ENCODE measurements at regions of chr1 and their contacts with region 1.

Region 1: GRCh38 chr1:205658943-205659581 is 21.2 kb downstream of the SLC45A3 start:
- DNase-seq: peak; percentile 85 to 95
- ATAC-seq: peak; percentile 83
- H3K4me3 ChIP-seq: no peak overlapping the region
- H3K27ac ChIP-seq: no peak overlapping the region
- H3K4me1 ChIP-seq: no peaks in the 10 kb centered on the region
- H3K27me3 ChIP-seq: no peaks in the 10 kb centered on the region

Region 2: GRCh38 chr1:205528887-205529825 is 129.9 kb before region 1 on chr1:
- intact Hi-C with region 1: loop called (anchors 5 kb)
- DNase-seq: peak; percentile 85 to 96
- ATAC-seq: peak; percentile 88
- H3K4me3 ChIP-seq: no peak overlapping the region
- H3K27ac ChIP-seq: no peak overlapping the region
- H3K4me1 ChIP-seq: no peaks in the 10 kb centered on the region
- H3K27me3 ChIP-seq: no peaks in the 10 kb centered on the region

Region 3: DNA sequence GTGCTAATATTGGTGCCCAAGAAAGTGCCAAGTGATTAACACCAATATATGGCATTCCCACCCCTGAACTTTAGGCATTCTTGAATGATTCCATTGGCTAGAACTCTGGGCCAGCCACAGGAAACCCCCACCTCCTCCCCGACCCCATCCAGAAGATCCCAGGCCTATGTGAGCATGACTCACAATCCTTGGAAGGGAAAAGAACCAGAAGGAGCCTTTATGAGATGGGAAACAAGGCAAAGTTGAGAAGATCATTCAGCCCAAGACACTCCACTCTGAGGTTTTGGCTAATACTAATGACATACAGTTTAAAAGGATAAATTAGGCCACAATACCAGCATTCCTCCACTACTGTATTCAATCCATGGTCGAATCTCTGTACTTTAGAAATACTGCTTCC is 49.0 kb before region 1 on chr1:
- intact Hi-C with region 1: no loop called
- DNase-seq: no peak
- ATAC-seq: no peak
- H3K4me3 ChIP-seq: no peak overlapping the region
- H3K27ac ChIP-seq: no peak overlapping the region
- H3K4me1 ChIP-seq: no peaks in the 10 kb centered on the region
- H3K27me3 ChIP-seq: no peaks in the 10 kb centered on the region

Region 4: GRCh38 chr1:205700865-205701401 is 41.9 kb after region 1 on chr1:
- intact Hi-C with region 1: loop called in 1 of 2 experiments (anchors 1 kb)
- DNase-seq: no peak
- ATAC-seq: peak; percentile 24
- H3K4me3 ChIP-seq: no peak overlapping the region
- H3K27ac ChIP-seq: no peak overlapping the region
- H3K4me1 ChIP-seq: no peaks in the 10 kb centered on the region
- H3K27me3 ChIP-seq: no peaks in the 10 kb centered on the region

Region 5: GRCh38 chr1:205711104-205712020 is 52.3 kb after region 1 on chr1:
- intact Hi-C with region 1: loop called (anchors 1 to 2 kb)
- DNase-seq: no peak
- ATAC-seq: peak; percentile 90
- H3K4me3 ChIP-seq: no peak overlapping the region
- H3K27ac ChIP-seq: no peak overlapping the region
- H3K4me1 ChIP-seq: no peaks in the 10 kb centered on the region
- H3K27me3 ChIP-seq: no peaks in the 10 kb centered on the region

Region 6: GRCh38 chr1:205739348-205740160 is 80.5 kb after region 1 on chr1:
- intact Hi-C with region 1: no loop called
- DNase-seq: no peak
- ATAC-seq: no peak
- H3K4me3 ChIP-seq: no peak overlapping the region
- H3K27ac ChIP-seq: no peak overlapping the region
- H3K4me1 ChIP-seq: peaks cover 2 to 7% of the 10 kb centered on the region in 2 donors
- H3K27me3 ChIP-seq: no peaks in the 10 kb centered on the region

Region 7: DNA sequence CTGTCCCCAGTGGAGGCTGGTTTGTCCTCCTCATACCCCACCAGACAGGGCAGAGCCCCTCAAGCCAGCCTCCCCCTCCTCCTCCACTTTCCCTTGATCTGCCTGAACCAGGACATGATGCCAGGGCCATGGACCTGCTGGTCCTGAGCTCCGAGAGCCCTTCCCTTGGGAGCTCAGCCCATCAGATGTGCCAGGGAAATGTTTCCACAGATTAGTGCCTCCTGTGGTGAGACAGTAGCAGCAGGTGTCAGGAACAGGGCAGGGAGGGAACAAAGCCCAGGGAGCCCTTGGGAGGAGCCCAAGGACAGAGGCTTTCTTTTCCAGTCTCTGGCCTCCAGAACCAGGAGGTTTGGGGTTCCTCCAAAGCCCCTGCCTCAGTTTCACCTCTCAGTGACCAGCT is 168.6 kb after region 1 on chr1:
- intact Hi-C with region 1: no loop called
- DNase-seq: no peak
- ATAC-seq: no peak
- H3K4me3 ChIP-seq: no peak overlapping the region
- H3K27ac ChIP-seq: no peak overlapping the region
- H3K4me1 ChIP-seq: peaks cover 0 to 4% of the 10 kb centered on the region in 2 donors
- H3K27me3 ChIP-seq: no peaks in the 10 kb centered on the region